ENCODE measurements at regions of chr7 and their contacts with region 1.

Region 1: DNA sequence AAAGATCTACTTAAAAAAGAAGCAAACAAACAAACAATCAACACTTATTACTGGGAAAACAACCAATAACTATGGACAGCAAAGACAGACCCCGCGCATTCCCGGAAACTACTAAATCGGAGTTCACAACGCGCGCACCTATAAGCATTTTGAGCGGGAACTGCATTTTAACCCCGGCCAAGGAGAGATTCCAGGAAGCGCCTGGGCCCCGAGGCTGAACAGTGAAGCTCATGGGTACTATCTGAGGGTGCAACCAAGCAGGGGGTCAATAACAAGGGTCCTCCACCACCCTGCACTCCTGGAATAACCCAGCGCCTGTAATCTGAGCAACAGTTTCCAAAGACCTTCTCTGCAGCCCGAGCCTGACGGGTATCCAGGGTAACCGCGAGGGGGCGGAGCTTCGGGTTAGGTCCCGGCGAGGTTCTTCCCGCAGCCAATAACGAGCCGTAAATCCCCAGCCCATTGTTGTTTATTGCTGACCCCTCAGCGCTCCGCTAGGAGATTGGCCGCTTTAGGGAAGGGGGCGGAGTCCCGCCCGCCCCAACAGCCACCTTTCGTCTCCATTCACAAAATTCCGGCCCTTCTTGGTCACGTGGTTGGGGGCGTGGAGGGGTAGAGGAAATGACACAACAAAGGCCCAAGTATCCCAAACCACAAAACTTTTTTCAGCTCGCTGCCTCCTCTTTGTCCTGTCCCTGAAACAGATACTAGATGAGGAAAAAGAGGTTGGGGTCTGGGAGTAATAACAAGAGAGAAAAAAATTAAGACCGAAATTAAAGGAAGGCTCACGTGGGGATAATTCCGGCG is 1.7 kb upstream of the ETV1 start:
- DNase-seq: peak; percentile 97
- ATAC-seq: peak; percentile 98

Region 2: DNA sequence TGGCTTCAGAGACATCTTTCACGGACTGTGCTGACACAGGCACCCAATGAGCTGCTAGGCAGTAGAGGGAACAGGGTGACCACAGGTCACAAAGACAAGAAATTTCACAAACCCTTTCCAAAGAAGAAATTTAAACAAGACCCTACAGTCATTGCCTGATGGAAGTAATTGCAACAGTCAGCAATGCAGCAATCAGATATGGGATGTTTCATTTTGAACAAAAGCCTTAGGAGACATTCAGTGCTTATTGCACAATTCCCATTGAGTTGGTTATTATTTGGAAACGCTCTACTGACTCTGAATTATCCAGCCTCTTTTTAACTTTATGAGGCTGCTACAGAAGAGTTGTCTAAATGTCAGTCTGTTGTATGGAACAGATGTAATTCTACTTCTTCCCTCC is 87.2 kb before region 1 on chr7:
- intact Hi-C with region 1: no loop called
- DNase-seq: no peak
- ATAC-seq: peak; percentile 65

Region 3: GRCh38 chr7:14070746-14071444 is 79.7 kb after region 1 on chr7:
- intact Hi-C with region 1: loop called (anchors 5 kb)
- DNase-seq: no peak
- ATAC-seq: no peak

Region 4: DNA sequence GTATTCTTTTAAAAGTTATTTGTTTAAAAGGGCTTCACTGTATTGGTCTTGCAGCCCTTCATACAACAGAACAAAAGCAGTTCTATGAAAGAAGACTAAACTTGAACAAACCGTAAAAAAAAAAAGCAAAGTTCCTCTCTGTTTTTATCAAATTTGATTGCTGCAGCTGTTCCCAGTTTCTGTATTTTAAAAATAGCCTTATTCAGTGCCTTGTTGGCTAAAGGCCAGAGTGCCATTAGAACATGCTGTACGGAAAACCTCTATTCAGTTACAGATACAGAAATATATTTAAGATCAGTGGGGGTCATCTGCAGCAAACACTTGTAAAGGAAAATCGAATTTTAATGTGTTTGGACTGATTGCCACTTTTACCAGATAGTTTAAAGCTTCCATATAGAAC is 206.1 kb after region 1 on chr7:
- intact Hi-C with region 1: loop called (anchors 5 kb)
- DNase-seq: no peak
- ATAC-seq: peak; percentile 74

Region 5: DNA sequence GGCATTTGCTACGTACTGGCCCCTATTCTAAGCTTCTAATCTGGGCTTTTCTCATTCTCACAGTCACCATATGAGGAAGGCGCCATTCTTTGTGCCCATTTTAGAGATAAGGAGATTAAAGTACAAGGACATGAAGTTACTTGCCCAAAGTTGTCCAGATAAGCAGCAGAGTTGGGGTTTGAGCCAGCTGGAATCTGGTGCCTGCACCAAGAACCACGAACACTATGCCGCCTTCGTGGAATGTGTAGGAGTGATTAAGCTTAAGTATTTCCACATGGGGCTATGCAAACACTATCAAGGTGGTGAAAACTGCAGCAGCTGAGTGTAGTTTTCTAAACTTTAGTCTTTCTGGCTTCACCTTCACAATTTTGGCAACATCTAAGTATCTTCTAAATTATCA is 341.0 kb after region 1 on chr7:
- intact Hi-C with region 1: loop called (anchors 10 kb)
- DNase-seq: peak; percentile 63
- ATAC-seq: peak; percentile 86

Region 6: DNA sequence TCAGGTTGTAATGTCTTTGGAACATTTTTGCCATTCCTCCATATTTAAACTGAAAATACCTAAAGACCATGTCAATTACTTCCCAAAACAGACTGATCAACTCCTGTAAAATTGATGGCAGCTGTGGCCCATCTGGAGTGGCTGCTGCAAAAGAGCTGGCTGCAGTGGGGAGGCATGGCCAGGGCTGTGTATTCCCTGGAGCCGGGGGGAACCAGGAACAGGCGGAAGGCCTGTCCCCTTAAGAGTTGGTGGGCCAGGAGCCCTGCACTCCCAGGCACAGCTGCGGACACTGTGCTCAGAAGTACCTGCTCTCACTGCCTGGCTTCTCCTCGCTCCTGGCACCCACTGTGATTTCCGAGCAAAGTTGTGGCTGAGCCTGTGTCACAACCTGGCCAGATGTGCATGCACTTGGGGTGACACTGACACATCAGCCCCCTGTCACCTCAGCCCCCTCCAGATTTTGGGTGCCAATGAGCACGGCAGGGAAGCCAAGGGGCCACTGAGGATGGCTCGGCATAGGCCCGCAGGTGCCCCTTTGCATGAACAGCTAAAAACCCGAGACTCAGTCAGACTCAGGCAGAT is 795.2 kb after region 1 on chr7:
- intact Hi-C with region 1: no loop called
- DNase-seq: peak; percentile 42
- ATAC-seq: no peak